ENCODE measurements at regions of chr6 and their contacts with region 1.

Region 1: DNA sequence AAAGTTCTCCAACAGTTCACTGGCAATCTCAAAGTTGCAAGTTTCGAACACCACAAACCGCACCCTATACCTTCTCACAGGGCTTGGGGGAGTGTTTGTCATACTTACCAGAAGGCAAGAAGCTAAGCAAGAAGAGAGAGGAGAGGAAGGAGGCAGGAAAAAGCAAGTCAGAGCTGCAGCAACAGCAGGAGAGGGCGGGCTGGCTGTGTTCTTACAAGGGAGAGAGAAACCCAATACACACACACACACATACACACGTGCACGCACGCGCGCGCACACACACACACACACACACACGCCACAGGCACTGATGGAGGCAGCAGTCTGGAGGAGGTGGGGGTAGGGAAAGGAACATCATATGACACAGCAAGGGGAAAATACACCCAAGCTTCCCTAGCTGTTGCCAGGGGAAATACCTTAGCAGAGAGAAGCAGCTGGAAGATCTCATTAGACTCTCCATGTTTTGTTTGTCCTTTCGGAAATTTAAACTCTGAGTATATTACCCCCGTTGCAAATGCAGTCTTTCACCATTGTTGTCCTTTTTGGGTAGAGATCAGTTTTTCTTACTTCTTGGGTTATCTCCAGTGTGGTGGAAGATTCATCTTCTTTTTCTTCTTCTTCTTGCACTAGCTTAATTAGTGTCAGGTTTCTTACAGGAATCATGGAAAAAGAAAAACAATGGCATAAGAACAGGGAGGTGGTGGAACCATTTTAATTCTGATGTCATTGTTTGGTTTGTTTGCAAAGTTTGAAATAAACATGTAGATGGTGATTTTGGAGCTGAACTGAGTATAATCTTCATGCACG is at the start of gene TXLNB:
- DNase-seq: peak; percentile 92
- ATAC-seq: peak; percentile 92
- H3K4me3 Mint-ChIP-seq: peak within 1 kb of the TSS; percentile 76
- H3K27ac Mint-ChIP-seq: peak within 1 kb of the TSS; percentile 96
- H3K4me1 Mint-ChIP-seq: peaks cover 55% of the 10 kb centered on the region
- H3K27me3 Mint-ChIP-seq: no peaks in the 10 kb centered on the region
- CTCF ChIP-seq: no peak
- total RNA-seq, gene TXLNB: 0.11 to 0.22 TPM

Region 2: GRCh38 chr6:139117734-139118133 is 174.3 kb before region 1 on chr6:
- CTCF ChIA-PET with region 1: no interaction called
- POLR2A ChIA-PET with region 1: no interaction called
- intact Hi-C with region 1: no loop called
- DNase-seq: no peak
- ATAC-seq: no peak
- H3K4me3 Mint-ChIP-seq: no peak overlapping the region
- H3K27ac Mint-ChIP-seq: no peak overlapping the region
- H3K4me1 Mint-ChIP-seq: peaks cover 48% of the 10 kb centered on the region
- H3K27me3 Mint-ChIP-seq: no peaks in the 10 kb centered on the region
- CTCF ChIP-seq: peak; percentile 42

Region 3: DNA sequence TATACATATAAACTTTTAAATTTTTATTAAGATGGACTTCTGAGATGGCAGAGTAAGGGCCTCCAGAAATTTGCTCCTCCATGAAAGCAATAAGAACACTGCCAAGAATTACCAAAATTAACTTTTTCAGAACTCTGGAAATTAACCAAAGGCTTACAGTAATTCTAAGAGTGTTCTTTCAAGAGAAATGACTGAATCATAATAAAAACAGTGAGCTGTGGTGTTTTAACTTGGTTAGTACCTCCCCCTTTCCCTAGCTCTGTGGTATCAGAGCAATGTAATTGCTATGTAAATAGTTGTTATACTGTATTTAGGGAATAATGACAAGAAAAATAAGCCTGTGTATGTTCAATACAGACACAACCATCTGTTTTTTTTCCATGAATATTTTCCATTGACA is 138.2 kb before region 1 on chr6:
- CTCF ChIA-PET with region 1: no interaction called
- POLR2A ChIA-PET with region 1: interaction called, 4 read pairs
- intact Hi-C with region 1: loop called (anchors 5 kb)
- DNase-seq: no peak
- ATAC-seq: peak; percentile 45
- H3K4me3 Mint-ChIP-seq: no peak overlapping the region
- H3K27ac Mint-ChIP-seq: peak overlapping the region; percentile 95
- H3K4me1 Mint-ChIP-seq: peaks cover 79% of the 10 kb centered on the region
- H3K27me3 Mint-ChIP-seq: no peaks in the 10 kb centered on the region
- CTCF ChIP-seq: no peak

Region 4: DNA sequence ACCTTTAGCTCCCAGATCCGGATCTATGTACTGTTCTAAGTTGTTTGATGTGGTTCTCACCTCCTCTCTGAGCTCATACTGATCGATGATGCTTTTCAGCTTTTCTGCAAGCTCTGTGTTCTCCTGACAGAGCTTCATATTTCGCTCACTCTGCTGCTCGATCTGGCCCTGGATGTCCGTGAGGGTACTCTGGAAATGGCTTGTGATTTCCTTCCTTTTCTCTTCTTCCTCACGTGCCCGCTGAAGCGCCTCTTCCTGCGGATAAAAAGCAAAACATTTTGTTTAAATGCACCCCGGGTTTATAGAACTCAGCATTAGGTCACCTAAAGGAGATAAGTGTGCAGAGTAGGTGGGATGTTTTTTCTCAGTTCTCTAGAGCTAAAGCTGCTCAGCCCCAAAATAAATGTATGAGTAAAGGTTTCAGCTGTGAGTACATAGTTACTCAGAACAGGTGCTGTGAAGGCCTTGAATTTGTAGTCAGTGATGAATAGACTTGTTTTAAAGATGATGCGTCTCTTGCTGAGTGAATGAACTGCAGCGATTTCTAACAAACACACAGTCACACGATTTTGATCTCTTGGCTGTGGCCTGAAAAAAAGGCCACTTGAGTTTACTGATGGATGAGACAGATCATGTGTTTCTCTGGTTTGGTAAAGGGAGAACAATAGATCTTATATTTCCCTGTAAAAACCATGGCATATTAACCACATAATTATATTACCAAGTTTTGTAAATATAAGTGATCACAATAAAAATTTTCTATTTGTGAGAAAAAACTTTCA is 29.3 kb before region 1 on chr6:
- CTCF ChIA-PET with region 1: interaction called, 11 read pairs
- POLR2A ChIA-PET with region 1: interaction called, 4 read pairs
- intact Hi-C with region 1: no loop called
- DNase-seq: peak; percentile 37
- ATAC-seq: peak; percentile 97
- H3K4me3 Mint-ChIP-seq: peak overlapping the region; percentile 66
- H3K27ac Mint-ChIP-seq: peak overlapping the region; percentile 87
- H3K4me1 Mint-ChIP-seq: peaks cover 19% of the 10 kb centered on the region
- H3K27me3 Mint-ChIP-seq: no peaks in the 10 kb centered on the region
- CTCF ChIP-seq: no peak

Region 5: DNA sequence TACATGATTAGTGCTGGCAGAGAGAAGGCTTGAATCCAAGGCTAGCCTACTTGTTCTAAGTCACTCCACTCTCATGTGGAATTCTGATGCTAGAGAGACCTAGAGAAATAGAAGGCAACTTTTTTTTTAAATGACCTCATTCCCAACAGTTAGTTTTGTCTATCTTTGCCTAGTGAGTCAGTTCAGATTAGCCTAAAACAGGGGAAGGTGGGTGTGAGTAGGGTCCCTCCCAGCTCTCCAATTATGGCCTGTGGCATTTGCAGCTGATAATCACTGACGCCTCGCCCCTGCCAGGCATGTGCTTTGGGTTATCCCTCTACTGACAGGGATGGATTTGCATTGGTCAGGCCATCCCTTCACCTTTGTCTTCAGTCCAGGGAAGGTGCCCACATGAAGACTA is 13.8 kb before region 1 on chr6:
- CTCF ChIA-PET with region 1: interaction called, 3 read pairs
- POLR2A ChIA-PET with region 1: interaction called, 10 read pairs
- intact Hi-C with region 1: no loop called
- DNase-seq: no peak
- ATAC-seq: no peak
- H3K4me3 Mint-ChIP-seq: no peak overlapping the region
- H3K27ac Mint-ChIP-seq: no peak overlapping the region
- H3K4me1 Mint-ChIP-seq: peaks cover 35% of the 10 kb centered on the region
- H3K27me3 Mint-ChIP-seq: no peaks in the 10 kb centered on the region
- CTCF ChIP-seq: no peak

Region 6: GRCh38 chr6:139369568-139370282 is 77.7 kb after region 1 on chr6:
- CTCF ChIA-PET with region 1: interaction called, 14 read pairs
- POLR2A ChIA-PET with region 1: interaction called, 11 read pairs
- intact Hi-C with region 1: loop called (anchors 5 kb)
- DNase-seq: peak; percentile 22
- ATAC-seq: no peak
- H3K4me3 Mint-ChIP-seq: peak overlapping the region; percentile 27
- H3K27ac Mint-ChIP-seq: peak overlapping the region; percentile 79
- H3K4me1 Mint-ChIP-seq: peaks cover 38% of the 10 kb centered on the region
- H3K27me3 Mint-ChIP-seq: no peaks in the 10 kb centered on the region
- CTCF ChIP-seq: peak; percentile 76